GM10248 (cell line): ENCODE measurements at regions of chr14 and their contacts with region 1.

Region 1: DNA sequence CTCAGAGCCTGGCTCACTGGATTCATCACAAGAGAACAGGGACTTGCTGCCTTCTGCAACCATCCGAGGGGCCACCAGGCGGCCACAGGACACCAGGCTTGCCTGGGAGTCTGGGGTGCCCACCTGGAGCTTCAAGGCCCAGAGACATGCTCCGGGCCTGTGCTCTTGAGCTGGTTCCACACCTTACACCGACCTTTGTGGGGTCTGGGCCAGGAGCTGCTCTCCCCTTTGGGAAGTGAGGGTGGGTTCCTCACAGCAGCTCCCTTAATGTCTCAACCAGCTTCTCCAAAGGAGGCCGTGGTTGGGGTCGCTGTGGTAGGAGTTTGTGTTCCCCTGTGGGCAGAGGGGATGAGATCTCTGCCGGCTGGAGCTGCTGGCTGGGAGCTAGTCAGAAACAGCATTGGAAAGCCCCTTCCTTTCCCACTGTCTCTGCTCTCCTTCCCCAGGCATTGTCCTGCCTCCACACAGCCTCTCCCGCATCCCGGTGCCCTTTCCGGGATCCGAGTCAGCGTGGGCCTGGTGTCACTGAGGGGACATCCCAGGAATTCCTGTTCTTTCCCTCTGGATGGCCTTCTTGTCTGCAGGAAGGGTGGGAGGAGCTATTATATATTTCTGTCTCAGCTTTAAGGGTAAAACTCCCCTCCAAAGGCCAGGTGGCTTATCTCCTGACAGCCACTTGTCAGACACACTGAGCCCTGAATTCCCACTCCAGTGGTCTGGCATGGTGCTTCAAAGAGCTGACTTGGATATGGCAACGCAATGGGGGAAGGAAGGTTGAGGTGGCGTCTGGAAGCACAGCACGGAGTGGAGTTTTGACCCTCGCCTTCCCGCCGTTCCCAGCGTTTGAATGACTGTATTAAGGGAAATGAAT is 5.1 kb upstream of the PAPLN start:
- DNase-seq: peak; percentile 57
- CTCF ChIP-seq: peak; percentile 58

Region 2: DNA sequence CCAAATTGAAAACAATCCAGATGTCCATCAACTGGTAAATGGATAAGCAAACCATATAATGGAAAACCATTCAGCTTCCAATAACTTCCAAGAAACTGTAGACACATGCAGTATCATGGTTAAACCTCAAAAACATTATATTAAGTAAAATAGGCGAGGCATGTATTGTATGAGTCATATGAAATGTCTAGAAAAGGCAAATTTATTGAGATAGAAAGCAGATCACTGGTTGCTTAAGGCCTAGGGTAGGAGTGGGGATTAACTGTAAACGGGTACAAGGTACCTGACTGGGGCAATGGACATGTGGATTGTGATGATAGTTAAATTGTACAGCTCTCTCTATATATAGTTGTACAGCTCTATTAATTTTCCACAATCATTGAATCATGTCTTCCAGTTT is 16.2 kb before region 1 on chr14:
- CTCF ChIA-PET with region 1: interaction called, 14 read pairs
- POLR2A ChIA-PET with region 1: no interaction called
- DNase-seq: no peak
- CTCF ChIP-seq: no peak

Region 3: GRCh38 chr14:73245401-73246325 is 13.4 kb after region 1 on chr14:
- CTCF ChIA-PET with region 1: interaction called, 16 read pairs
- POLR2A ChIA-PET with region 1: no interaction called
- DNase-seq: peak; percentile 76
- CTCF ChIP-seq: no peak